Calu3 (cell line): ENCODE measurements at regions of chr18 and their contacts with region 1.

Region 1: DNA sequence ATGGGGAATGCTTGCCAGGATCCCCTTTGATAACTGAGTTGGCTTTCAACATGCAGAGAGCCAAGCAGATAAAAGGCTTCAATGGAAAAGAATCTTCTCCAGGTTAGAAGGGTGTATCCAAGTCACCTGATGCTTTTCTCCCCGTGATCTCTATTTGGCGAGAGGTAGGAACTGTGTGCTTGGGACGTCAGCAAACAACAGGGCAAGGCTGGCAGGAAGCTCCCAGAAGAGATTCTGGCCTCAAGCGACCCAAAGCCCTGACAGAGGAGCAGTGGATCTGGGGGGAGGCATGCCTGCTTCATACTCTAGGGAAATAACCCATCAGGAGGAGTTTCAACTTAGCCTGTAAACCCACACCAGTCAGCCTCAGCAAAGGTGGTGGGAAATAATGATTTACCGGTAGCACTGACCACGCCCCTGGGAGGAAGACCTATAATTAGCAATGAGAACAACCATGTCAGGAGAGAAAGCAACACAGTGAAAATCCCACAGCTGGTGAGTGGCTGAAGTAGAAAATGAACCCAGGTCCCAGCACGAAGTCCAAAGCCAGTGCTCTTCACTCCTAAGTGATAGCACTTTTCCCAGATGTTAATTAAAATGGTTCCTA is 76.3 kb upstream of the SEC11C start:
- DNase-seq: peak; percentile 72
- H3K4me3 Mint-ChIP-seq: peak overlapping the region; percentile 62
- H3K27ac Mint-ChIP-seq: peak overlapping the region; percentile 86
- H3K4me1 Mint-ChIP-seq: peaks cover 66% of the 10 kb centered on the region
- H3K27me3 Mint-ChIP-seq: no peaks in the 10 kb centered on the region
- CTCF ChIP-seq: no peak

Region 2: DNA sequence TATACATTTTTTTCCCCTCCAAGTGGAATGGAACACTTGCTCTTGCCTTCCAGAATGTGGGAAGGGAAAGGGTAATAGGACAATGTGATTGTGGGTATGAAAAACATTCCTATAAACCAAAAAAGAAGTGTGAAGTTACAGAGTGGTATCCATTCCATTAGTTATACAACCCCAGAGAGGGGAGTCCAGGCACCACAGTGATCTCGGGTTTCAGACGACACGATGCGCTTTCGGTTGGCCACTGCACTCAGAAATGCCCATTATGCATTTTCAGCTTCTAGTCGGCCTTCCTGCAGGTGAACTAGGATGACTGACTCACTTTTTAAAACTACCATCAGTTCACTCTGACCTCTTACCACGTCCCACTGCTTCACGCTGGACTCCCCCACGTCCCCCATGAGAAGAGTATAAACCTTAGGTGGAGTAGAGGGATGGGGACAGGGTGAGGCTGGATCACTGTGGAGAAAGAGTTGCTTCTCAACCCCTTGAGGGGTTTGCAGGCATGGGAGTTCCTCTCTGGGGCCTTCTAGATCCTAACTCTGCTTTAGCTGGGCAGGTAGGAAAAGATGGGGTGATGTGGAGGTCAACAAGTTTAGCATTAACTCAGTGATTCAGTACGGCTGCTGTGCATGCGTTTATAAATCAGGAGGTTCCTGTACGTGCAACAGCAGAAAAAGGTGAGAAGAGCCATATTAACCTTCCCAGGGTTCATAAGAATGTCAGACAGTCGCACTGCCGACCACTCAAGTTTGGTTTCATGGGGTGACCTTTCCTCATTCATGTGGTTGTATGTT is 148.2 kb before region 1 on chr18:
- CTCF ChIA-PET with region 1: no interaction called
- intact Hi-C with region 1: loop called (anchors 1 kb)
- DNase-seq: peak; percentile 71
- H3K4me3 Mint-ChIP-seq: peak overlapping the region; percentile 59
- H3K27ac Mint-ChIP-seq: peak overlapping the region; percentile 78
- H3K4me1 Mint-ChIP-seq: peaks cover 65% of the 10 kb centered on the region
- H3K27me3 Mint-ChIP-seq: no peaks in the 10 kb centered on the region
- CTCF ChIP-seq: no peak

Region 3: DNA sequence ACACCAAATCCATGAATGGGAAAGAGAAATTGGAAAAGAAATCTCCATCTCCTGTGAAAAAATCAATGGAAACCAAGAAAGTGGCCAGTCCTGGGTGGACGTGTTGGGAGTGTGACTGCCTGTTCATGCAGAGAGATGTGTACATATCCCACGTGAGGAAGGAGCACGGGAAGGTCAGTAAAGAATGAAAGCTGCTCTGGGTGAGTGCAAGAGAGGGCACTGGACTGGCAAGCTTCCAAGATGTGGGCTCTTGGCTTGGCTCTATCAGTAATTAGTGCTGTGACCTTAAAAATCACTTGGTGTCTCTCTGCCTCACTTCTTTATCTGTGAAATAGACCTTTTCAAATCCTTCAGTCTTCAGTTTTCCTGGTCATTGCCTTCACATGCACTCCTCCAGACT is 109.8 kb before region 1 on chr18:
- CTCF ChIA-PET with region 1: no interaction called
- intact Hi-C with region 1: loop called (anchors 5 kb)
- DNase-seq: peak; percentile 56
- H3K4me3 Mint-ChIP-seq: peak overlapping the region; percentile 44
- H3K27ac Mint-ChIP-seq: peak overlapping the region; percentile 33
- H3K4me1 Mint-ChIP-seq: peaks cover 37% of the 10 kb centered on the region
- H3K27me3 Mint-ChIP-seq: no peaks in the 10 kb centered on the region
- CTCF ChIP-seq: no peak

Region 4: DNA sequence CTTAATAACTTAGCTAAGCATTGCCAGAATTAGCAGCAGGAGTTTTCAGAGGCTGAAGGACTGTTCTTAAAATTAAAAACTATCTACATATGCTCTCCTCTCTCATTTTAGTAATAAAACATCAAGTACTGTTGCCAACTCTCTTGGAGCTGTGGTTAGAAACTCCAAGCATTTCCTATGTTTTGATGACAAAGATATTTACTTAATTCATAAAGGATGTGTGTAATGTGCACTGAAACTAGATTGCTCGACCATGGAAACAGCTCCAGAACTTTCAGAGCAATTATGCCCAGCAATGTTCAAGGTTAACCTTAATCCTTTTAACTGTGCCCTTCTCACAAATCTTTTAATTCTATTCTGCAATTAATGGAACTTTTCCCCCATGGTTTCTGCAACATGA is 164.9 kb after region 1 on chr18:
- CTCF ChIA-PET with region 1: no interaction called
- intact Hi-C with region 1: no loop called
- DNase-seq: no peak
- H3K4me3 Mint-ChIP-seq: no peak overlapping the region
- H3K27ac Mint-ChIP-seq: no peak overlapping the region
- H3K4me1 Mint-ChIP-seq: no peaks in the 10 kb centered on the region
- H3K27me3 Mint-ChIP-seq: peaks cover 93% of the 10 kb centered on the region
- CTCF ChIP-seq: no peak